ENCODE measurements at regions of chr22 and their contacts with region 1.

Region 1: GRCh38 chr22:30305519-30305905 is 16.2 kb upstream of the CASTOR1 start:
- DNase-seq: peak; percentile 69
- CTCF ChIP-seq: no peak

Region 2: GRCh38 chr22:30326706-30327362 is 21.3 kb after region 1 on chr22 and contains the start of gene TBC1D10A:
- CTCF ChIA-PET with region 1: interaction called, 11 read pairs
- POLR2A ChIA-PET with region 1: interaction called, 4 read pairs
- DNase-seq: peak; percentile 100
- CTCF ChIP-seq: no peak

Measured in GM10248 (cell line).